ENCODE measurements at regions of chr3 and their contacts with region 1.

Region 1: DNA sequence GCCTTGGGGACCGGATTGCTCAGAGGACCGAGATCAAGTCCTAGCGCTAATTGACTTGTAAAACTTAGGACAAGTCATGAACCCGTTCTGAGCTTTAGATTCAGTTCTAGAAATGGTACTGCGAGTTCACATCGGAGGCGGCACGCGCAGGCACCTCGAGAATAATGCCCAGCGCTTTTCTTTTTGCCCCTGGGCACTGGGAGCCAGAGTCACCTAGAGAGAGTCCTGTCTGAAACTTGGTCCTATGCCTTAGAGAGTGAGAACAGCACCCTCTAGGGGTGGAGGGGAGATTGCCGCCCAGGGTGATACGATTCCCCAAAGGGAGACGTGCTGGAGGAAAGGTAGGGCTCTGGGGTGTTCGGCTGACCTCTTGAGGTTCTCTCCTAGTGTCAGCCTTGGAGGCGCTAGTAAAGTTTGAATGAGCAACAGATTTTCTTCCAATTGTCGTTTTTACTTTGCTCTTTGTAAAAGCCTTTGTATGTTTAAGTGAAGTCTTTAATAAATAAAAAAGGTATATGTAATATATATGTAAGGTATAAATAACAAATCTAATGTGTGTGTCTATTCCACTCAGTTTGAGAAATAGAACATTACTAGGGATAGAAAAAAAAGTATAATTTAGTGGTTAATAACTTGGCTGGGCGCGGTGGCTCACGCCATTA is 826 bp downstream of the EEF1AKMT4 start:
- DNase-seq: peak; percentile 85
- H3K4me3 Mint-ChIP-seq: peak overlapping the region; percentile 95
- H3K27ac Mint-ChIP-seq: peak overlapping the region; percentile 99
- H3K4me1 Mint-ChIP-seq: peaks cover 7% of the 10 kb centered on the region
- H3K27me3 Mint-ChIP-seq: no peaks in the 10 kb centered on the region

Region 2: DNA sequence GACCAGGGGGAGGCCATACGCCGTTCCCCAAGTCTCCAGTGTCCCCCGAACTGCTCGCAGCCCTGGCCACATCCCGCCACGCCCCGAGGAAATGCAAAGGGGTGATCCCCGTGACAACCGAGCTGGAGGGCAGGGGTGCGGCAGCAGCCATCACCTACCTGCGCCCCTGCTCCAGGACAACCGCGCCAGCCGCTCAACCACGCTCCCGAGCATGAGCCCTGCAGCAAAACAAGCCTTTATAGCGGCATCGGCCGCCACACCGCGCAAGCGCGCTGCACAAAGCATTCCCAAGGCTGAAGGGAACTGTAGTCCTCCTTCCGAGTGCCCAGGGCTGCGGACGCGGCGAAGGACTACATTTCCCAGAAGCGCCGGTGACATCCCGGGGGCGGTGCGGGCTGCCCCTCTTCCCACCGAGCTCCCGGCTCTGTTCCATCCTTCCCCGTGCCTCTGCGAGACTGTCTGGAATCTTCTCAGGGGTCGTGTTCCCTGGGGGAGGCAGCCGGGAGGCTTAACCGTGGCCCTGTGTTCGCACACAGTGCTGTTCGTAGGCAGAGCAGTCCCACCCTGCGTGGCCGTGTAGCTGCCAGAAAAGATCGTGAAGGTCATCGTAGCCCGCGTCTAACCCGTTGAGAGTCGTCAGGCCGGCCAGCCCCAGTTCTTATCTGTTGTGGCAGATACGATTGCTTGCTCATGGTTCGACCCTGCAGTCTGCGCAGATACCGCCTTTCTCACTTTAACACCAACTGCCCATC is 232.4 kb before region 1 on chr3 and contains the start of gene ABCC5:
- intact Hi-C with region 1: loop called (anchors 2 kb)
- DNase-seq: peak; percentile 78
- H3K4me3 Mint-ChIP-seq: peak within 1 kb of the TSS; percentile 97
- H3K27ac Mint-ChIP-seq: peak within 1 kb of the TSS; percentile 86
- H3K4me1 Mint-ChIP-seq: peaks cover 23% of the 10 kb centered on the region
- H3K27me3 Mint-ChIP-seq: peaks cover 10% of the 10 kb centered on the region
- total RNA-seq, gene ABCC5: 20.6 and 21.0 TPM in 2 replicates

Region 3: DNA sequence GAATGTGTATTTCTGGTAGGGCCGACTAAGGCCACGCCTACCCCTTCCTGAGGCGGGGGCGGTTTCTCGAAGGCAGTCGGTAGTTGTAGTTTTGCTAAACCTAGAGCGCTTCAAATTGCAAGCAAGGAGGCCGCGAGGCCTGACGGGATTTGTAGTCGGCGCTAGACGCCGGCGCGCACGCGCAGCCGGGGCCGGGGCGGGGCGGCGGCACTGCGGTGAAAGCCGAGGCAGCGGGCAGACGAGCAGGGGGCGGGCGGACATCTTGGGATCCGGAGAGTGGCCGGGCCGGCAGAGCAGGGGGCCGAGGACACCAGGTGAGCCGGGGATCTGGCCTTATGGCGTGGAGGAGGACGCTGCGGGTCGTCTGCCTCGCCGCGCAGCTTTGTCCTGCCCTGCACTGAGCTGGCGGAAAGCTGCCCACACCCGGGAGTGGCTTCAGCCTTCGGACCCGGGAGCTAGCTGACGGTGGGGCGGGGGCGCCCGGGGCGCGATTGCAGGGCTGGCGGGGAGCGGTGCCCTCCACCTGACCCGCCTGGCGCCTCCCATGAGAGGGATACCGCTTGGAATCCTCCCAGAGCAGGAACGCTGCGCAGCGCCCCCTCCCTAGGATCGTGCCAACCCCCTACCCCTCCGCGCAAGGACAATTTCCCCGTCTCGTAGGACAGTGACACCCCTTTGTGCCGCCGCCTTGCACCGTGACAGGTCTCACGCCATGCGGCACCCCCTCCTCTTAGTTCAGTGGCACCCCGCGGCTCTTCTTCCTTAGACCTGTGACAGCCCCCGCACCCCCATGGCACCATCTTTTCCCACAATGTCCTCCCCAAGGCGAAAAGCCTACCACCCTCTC is 75.4 kb before region 1 on chr3 and contains the start of gene AP2M1:
- intact Hi-C with region 1: loop called (anchors 2 kb)
- DNase-seq: peak; percentile 98
- H3K4me3 Mint-ChIP-seq: peak within 1 kb of the TSS; percentile 97
- H3K27ac Mint-ChIP-seq: peak within 1 kb of the TSS; percentile 82
- H3K4me1 Mint-ChIP-seq: peaks cover 17% of the 10 kb centered on the region
- H3K27me3 Mint-ChIP-seq: no peaks in the 10 kb centered on the region
- total RNA-seq, gene AP2M1: 234 and 240 TPM in 2 replicates

Region 4: DNA sequence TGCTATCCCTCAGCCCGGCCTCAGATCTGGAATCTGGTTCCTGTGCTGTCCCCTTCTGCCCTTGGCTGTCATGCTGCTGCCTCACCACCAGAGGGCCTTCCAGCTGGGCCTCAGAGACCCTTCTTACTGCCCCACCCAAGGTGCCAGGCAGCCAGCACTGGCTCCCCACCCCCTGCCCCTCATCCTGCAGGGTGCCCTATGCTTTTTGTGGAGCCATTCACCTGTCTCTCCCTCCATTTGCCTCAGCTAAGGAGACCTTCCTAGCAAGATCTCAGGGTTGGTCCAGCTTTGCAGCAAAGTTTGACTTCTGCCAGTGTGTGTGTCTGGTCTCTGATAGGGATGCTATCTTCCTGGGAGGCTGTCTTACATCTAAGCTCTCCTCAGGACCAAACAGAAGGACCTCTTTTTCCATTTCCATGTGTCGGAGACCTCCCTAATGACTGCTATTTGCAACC is 22.8 kb before region 1 on chr3:
- intact Hi-C with region 1: loop called (anchors 1 kb)
- DNase-seq: peak; percentile 26
- H3K4me3 Mint-ChIP-seq: no peak overlapping the region
- H3K27ac Mint-ChIP-seq: no peak overlapping the region
- H3K4me1 Mint-ChIP-seq: peaks cover 6% of the 10 kb centered on the region
- H3K27me3 Mint-ChIP-seq: peaks cover 52% of the 10 kb centered on the region

Region 5: GRCh38 chr3:184298759-184299496 is 48.6 kb after region 1 on chr3 and contains the start of gene PSMD2:
- intact Hi-C with region 1: loop called (anchors 1 kb)
- DNase-seq: peak; percentile 94
- H3K4me3 Mint-ChIP-seq: peak within 1 kb of the TSS; percentile 92
- H3K27ac Mint-ChIP-seq: peak within 1 kb of the TSS; percentile 58
- H3K4me1 Mint-ChIP-seq: peaks cover 17% of the 10 kb centered on the region
- H3K27me3 Mint-ChIP-seq: peaks cover 2% of the 10 kb centered on the region
- total RNA-seq, gene PSMD2: 268 and 275 TPM in 2 replicates

Region 6: DNA sequence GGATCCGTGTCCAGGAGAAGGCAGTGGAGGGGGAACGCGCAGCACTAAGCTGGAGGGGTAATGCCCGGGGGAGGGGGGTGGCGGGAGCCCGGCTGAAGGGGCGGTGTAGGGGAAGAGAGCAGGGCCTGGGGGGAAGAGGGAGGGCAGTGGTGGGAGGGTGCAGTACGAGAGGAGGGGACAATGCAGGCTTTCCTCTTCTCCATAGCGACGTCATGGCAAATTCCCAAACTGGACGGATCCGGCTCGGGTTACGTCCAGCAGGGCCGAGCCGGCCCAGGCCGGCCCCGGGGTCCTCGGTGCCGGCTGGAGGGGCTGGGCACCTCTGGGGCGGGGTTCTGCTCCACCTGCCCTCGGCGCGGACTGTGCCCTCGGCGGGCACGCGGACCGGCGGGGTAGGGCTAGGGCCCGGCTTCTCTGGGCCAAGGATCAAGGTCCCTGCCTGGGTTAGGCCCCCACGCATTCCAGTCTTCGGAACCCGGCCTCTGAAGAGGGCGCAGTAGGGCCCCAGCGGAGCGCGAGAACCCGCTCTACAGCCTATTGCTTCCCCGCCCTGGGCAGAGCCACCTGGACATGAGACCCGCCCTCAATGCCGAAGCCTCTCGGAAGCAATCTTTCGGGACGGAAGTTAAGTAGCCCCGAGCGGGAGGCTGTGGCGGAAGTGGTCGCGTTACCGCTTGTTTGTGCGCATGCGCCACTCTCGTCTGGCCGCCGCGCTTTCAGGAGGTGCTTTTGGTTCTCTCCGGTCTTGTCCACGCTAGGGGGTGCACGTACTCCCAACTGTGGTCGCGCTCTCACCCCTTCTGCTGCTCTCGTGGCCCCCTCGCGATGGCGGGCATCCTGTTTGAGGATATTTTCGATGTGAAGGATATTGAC is 112.6 kb after region 1 on chr3:
- intact Hi-C with region 1: loop called (anchors 1 kb)
- DNase-seq: peak; percentile 96
- H3K4me3 Mint-ChIP-seq: peak overlapping the region; percentile 100
- H3K27ac Mint-ChIP-seq: peak overlapping the region; percentile 97
- H3K4me1 Mint-ChIP-seq: peaks cover 22% of the 10 kb centered on the region
- H3K27me3 Mint-ChIP-seq: no peaks in the 10 kb centered on the region